ENCODE measurements at regions of chr2 and their contacts with region 1.

Region 1: GRCh38 chr2:105627534-105627933 is 117.2 kb upstream of the NCK2 start:
- DNase-seq: no peak
- ATAC-seq: no peak
- H3K4me3 ChIP-seq: no peak overlapping the region
- H3K27ac ChIP-seq: no peak overlapping the region
- H3K4me1 ChIP-seq: no peaks in the 10 kb centered on the region
- H3K27me3 ChIP-seq: peaks cover 0 to 11% (median 0%) of the 10 kb centered on the region in 7 donors
- CTCF ChIP-seq: no peak

Region 2: GRCh38 chr2:105691947-105692390 is 64.4 kb after region 1 on chr2:
- intact Hi-C with region 1: loop called in 1 of 10 experiments (anchors 5 kb)
- DNase-seq: no peak
- ATAC-seq: no peak
- H3K4me3 ChIP-seq: no peak overlapping the region
- H3K27ac ChIP-seq: no peak overlapping the region
- H3K4me1 ChIP-seq: peaks cover 0 to 4% (median under 1%) of the 10 kb centered on the region in 9 donors
- H3K27me3 ChIP-seq: no peaks in the 10 kb centered on the region
- CTCF ChIP-seq: no peak

Region 3: GRCh38 chr2:105904938-105905337 is 277.4 kb after region 1 on chr2:
- intact Hi-C with region 1: loop called in 1 of 10 experiments (anchors 5 kb)
- DNase-seq: no peak
- ATAC-seq: no peak
- H3K4me3 ChIP-seq: no peak overlapping the region
- H3K27ac ChIP-seq: no peak overlapping the region
- H3K4me1 ChIP-seq: peaks cover 0 to 40% (median 8%) of the 10 kb centered on the region in 9 donors
- H3K27me3 ChIP-seq: no peaks in the 10 kb centered on the region
- CTCF ChIP-seq: no peak

Measured in heart right ventricle (tissue), 16 donors.